Activated CD4-positive, alpha-beta memory T cell treated with anti-CD3 and anti-CD28 coated beads, Interleukin-2, amount 10 ng/mL, durations not matched to agents 7 days and 5 days (primary cell): ENCODE measurements at regions of chr16 and their contacts with region 1.

Region 1: GRCh38 chr16:28846080-28846932 is at the start of gene TUFM:
- DNase-seq: peak; percentile 99
- H3K4me3 Mint-ChIP-seq: peak within 1 kb of the TSS; percentile 94
- H3K27ac Mint-ChIP-seq: peak within 1 kb of the TSS; percentile 91
- H3K4me1 Mint-ChIP-seq: peaks cover 32% of the 10 kb centered on the region
- H3K27me3 Mint-ChIP-seq: no peaks in the 10 kb centered on the region
- total RNA-seq, gene TUFM: 107 TPM

Region 2: GRCh38 chr16:28823872-28824716 is 22.2 kb before region 1 on chr16:
- CTCF ChIA-PET with region 1: no interaction called
- POLR2A ChIA-PET with region 1: interaction called, 77 read pairs
- DNase-seq: peak; percentile 96
- H3K4me3 Mint-ChIP-seq: peak overlapping the region; percentile 99
- H3K27ac Mint-ChIP-seq: peak overlapping the region; percentile 99
- H3K4me1 Mint-ChIP-seq: peaks cover 56% of the 10 kb centered on the region
- H3K27me3 Mint-ChIP-seq: no peaks in the 10 kb centered on the region

Region 3: DNA sequence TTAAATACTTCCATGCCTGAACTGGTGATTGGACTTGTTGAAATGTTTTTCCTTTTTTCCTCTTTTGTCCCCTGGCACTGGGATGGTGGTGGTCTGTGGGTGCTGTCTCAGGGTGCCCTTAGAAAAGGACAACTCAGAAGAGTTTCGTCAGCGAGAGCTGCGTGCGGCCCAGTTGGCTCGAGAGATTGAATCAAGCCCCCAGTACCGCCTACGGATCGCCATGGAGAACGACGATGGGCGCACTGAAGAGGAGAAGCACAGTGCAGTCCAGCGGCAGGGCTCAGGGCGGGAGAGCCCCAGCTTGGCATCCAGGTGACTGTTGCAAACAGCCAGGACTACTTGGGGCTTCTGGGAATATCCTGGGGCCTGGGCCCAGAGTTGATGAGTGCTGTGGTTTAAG is 16.6 kb before region 1 on chr16:
- CTCF ChIA-PET with region 1: no interaction called
- POLR2A ChIA-PET with region 1: interaction called, 77 read pairs
- DNase-seq: no peak
- H3K4me3 Mint-ChIP-seq: no peak overlapping the region
- H3K27ac Mint-ChIP-seq: no peak overlapping the region
- H3K4me1 Mint-ChIP-seq: peaks cover 38% of the 10 kb centered on the region
- H3K27me3 Mint-ChIP-seq: no peaks in the 10 kb centered on the region

Region 4: DNA sequence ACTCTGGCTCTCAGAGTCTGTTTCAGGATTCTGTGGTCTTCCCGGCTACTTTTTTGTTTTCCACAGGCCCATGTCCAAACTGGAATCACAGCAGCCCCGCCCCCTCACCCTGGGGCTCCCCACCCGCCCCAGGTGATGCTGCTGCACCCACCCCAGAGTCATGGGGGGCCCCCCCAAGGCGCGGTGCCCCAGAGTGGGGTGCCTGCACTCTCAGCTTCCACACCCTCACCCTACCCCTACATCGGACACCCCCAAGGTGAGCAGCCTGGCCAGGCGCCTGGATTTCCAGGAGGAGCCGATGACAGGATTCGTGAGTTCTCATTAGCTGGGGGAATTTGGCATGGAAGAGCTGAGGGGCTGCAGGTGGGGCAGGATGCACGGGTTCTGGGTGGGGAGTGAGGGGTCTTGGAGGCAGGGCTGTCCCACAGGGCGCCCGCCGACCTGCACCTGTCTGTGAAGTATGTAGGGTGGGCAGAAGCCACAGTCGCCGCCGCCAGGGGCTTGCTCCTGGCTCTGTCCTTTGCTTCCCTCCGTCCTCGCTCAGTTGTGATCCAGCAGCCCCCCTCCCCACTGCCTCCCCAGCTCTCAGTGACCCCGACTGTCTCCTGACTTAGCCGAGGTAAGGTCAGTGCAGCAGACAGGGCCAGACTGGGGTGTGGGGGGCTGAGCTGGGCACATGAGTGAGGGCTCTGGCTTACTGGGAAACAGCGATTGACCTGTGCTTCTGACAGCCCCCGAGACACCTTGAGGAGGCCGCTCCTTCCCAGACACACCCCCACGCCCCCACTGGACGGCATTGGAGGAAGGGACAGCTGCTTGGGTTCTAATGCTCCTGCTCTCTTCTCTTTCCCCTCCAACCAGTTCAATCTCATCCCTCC is 10.2 kb before region 1 on chr16:
- CTCF ChIA-PET with region 1: no interaction called
- POLR2A ChIA-PET with region 1: interaction called, 38 read pairs
- DNase-seq: no peak
- H3K4me3 Mint-ChIP-seq: no peak overlapping the region
- H3K27ac Mint-ChIP-seq: no peak overlapping the region
- H3K4me1 Mint-ChIP-seq: peaks cover 3% of the 10 kb centered on the region
- H3K27me3 Mint-ChIP-seq: no peaks in the 10 kb centered on the region

Region 5: DNA sequence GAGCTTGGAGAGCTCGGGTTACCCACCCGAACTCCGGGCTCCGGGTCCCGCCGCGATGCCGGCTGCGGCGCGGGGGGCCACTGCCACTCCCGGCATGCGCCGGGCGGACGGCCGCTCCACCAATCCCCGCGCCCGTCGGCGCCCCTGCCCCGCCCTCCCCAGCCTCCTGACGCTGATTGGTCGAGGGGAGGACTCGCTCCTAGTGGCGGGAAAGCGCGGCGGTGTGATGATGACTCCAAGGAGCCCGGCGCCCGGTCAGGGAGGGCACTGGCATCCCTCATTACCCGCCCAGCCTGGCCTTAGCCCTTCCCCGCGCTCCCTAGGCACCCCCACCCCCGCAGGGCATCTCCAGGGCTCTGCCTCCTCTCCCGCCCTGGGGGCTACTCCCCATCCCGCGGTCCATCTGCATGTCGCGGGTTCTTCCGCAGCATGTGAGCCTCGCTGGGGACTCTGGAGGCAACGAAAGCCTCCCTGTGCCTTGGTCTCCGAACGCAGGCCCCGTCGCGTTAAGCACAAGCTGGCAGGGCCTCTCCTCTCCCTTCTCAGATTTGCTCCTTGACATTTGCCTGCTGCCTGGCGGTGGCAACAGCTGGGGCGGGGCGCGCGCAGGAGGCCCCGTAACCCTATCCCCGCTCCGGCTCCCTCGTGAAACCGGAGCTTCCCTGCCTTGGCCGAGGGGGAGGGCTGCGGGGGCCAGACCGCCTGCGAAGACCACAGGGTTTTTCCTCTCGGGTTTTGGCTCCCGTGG is 33.7 kb after region 1 on chr16:
- CTCF ChIA-PET with region 1: interaction called, 4 read pairs
- POLR2A ChIA-PET with region 1: interaction called, 15 read pairs
- DNase-seq: peak; percentile 93
- H3K4me3 Mint-ChIP-seq: peak overlapping the region; percentile 88
- H3K27ac Mint-ChIP-seq: peak overlapping the region; percentile 26
- H3K4me1 Mint-ChIP-seq: peaks cover 35% of the 10 kb centered on the region
- H3K27me3 Mint-ChIP-seq: peaks cover 6% of the 10 kb centered on the region

Region 6: GRCh38 chr16:28910086-28911031 is 64.1 kb after region 1 on chr16:
- CTCF ChIA-PET with region 1: no interaction called
- POLR2A ChIA-PET with region 1: no interaction called
- DNase-seq: no peak
- H3K4me3 Mint-ChIP-seq: no peak overlapping the region
- H3K27ac Mint-ChIP-seq: no peak overlapping the region
- H3K4me1 Mint-ChIP-seq: no peaks in the 10 kb centered on the region
- H3K27me3 Mint-ChIP-seq: no peaks in the 10 kb centered on the region

Region 7: DNA sequence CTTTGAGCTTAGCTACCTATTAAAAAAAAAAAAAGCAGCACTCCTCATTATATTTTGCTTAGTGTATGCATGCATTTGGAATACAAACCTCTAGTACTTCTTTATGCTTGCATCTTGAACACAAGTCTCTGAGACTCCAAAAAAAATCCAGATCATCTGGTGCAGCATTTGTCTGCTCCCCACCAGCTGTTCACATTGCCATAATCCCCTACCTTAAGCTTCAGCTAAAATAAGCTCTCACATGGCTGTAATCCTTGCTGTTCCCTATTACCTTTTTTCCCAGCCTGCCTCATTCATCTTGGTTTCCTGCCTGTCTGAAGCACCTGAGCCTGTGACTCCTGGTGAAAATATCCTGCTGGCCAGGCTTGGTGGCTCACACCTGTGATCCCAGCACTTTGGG is 97.0 kb after region 1 on chr16:
- CTCF ChIA-PET with region 1: interaction called, 11 read pairs
- POLR2A ChIA-PET with region 1: interaction called, 6 read pairs
- DNase-seq: no peak
- H3K4me3 Mint-ChIP-seq: no peak overlapping the region
- H3K27ac Mint-ChIP-seq: no peak overlapping the region
- H3K4me1 Mint-ChIP-seq: peaks cover 23% of the 10 kb centered on the region
- H3K27me3 Mint-ChIP-seq: peaks cover 2% of the 10 kb centered on the region

Region 8: GRCh38 chr16:28964072-28964471 is 117.8 kb after region 1 on chr16:
- CTCF ChIA-PET with region 1: no interaction called
- POLR2A ChIA-PET with region 1: no interaction called
- DNase-seq: no peak
- H3K4me3 Mint-ChIP-seq: no peak overlapping the region
- H3K27ac Mint-ChIP-seq: no peak overlapping the region
- H3K4me1 Mint-ChIP-seq: peaks cover 2% of the 10 kb centered on the region
- H3K27me3 Mint-ChIP-seq: no peaks in the 10 kb centered on the region

Region 9: DNA sequence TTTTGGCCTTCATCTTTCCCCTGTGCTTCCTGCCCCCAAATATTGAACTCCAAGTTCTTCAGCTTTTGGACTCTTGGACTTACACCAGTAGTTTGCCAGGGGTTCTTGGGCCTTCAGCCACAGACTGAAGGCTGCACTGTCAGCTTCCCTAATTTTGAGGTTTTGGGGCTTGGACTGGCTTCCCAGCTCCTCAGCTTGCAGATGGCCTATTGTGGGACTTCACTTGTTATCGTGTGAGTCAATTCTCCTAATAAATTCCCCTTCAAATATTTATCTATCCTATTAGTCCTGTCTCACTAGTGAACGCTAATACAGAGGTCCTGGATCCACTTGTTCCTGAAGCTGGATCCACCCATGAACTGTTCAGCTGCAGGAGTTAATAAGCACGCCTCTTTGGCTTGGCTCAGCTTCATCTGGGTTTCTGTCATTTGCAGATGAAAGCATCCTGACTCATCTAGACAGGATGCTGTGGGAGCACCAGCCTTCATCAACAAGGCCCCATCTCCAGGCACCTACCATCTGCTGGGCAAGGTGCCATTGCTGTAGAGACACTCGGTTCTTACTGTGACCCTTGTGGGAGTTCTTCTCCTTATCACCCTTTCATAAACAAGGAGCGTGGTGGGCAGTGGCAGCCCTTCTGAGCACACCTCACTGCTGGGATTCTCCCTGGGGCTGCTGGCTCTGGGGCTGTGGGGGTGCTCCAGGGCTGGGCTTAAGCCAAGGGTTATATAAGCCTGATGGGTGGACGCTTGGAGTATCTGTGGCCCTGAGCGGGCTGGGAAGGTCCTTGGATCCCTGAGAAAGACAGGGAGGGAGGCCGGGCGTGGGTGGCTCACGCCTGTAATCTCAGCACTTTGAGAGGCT is 161.7 kb after region 1 on chr16:
- CTCF ChIA-PET with region 1: no interaction called
- POLR2A ChIA-PET with region 1: no interaction called
- DNase-seq: peak; percentile 80
- H3K4me3 Mint-ChIP-seq: no peak overlapping the region
- H3K27ac Mint-ChIP-seq: peak overlapping the region; percentile 88
- H3K4me1 Mint-ChIP-seq: peaks cover 51% of the 10 kb centered on the region
- H3K27me3 Mint-ChIP-seq: no peaks in the 10 kb centered on the region

Region 10: DNA sequence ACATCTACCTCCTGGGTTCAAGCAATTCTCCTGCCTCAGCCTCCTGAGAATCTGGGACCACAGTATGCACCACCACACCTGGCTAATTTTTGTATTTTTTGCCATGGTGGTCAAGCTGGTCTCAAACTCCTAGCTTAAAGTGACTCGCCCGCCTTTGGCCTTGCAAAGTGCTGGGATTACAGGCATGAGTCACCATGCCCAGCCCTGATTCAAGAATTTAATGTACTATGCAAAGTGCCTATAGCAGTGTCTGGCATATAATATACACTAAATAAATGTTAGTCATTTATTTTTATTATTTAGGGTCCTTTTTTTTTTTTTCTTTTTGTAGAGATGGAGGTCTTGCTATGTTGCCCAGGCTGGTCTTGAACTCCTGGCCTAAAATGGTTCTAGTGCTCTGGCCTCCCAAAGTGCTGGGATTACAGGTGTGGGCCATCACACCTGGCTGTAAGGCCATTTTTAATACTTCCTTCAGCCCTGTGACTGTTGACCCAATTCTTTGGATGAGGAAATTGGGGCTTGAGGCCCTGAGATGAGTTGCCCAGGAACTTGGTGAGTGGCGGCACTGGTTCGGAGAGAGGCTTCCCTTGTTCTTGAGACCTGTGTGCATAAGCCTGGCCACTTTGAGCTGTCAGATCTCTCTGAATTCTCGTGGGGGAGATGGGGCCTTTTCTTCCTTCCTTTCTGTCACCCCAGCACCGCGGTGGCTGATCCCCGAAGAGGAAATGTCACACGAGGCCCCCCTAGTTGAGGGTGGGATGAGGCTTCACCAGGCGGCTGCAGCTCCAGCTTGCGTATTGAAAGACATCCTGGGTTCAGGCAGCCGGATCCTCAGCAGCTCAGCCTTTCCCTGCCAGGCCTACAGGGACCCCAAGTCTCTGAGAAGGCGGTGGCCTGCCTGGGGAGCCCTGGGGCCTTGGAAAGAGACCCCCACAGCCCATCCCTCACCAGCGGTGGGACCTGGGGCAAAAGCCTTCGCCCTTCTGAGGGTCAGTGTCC is 177.3 kb after region 1 on chr16:
- CTCF ChIA-PET with region 1: no interaction called
- POLR2A ChIA-PET with region 1: no interaction called
- DNase-seq: no peak
- H3K4me3 Mint-ChIP-seq: no peak overlapping the region
- H3K27ac Mint-ChIP-seq: no peak overlapping the region
- H3K4me1 Mint-ChIP-seq: peaks cover 38% of the 10 kb centered on the region
- H3K27me3 Mint-ChIP-seq: no peaks in the 10 kb centered on the region